ENCODE measurements at regions of chr16 and their contacts with region 1.

Region 1: DNA sequence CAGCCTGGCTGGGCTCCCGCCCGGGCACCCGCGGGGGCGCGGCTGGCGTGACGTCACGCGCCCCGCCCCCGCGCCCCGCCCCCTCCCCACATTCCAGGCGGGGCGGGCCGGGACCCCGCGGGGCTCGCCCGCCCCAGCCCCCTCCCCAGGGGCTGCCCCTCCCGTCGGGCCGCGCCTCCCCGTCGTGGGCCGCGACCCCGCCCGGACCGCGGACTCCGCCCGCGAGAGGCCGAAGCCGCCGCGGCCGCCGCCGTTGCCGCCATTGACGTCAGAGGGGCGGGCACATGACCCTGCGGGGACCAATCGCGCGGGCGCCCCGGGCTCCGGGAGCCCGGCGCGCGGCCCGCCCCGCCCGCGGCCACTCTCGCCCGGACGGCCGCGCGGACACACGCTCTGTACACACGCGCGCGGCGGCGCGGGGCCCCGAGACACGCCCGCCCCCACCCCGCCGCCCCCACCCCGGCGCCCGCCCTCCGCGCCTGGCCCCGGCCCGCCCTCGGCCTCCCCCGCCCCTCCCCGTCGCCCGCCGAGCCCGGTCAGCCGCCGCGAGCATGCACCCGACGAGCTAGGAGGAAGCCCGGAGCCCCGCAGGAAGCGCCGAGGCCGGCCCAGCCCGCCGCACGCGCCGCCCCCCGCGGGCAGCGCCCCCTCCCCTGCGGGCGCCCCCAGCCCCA is at the start of gene CMIP:
- DNase-seq: peak; percentile 81
- ATAC-seq: peak; percentile 75
- H3K4me3 Mint-ChIP-seq: peak within 1 kb of the TSS; percentile 87
- H3K27ac Mint-ChIP-seq: peak within 1 kb of the TSS; percentile 88
- H3K4me1 Mint-ChIP-seq: peaks cover 44% of the 10 kb centered on the region
- H3K27me3 Mint-ChIP-seq: peaks cover 2% of the 10 kb centered on the region
- CTCF ChIP-seq: no peak
- total RNA-seq, gene CMIP: 37.6 to 38.5 TPM

Region 2: DNA sequence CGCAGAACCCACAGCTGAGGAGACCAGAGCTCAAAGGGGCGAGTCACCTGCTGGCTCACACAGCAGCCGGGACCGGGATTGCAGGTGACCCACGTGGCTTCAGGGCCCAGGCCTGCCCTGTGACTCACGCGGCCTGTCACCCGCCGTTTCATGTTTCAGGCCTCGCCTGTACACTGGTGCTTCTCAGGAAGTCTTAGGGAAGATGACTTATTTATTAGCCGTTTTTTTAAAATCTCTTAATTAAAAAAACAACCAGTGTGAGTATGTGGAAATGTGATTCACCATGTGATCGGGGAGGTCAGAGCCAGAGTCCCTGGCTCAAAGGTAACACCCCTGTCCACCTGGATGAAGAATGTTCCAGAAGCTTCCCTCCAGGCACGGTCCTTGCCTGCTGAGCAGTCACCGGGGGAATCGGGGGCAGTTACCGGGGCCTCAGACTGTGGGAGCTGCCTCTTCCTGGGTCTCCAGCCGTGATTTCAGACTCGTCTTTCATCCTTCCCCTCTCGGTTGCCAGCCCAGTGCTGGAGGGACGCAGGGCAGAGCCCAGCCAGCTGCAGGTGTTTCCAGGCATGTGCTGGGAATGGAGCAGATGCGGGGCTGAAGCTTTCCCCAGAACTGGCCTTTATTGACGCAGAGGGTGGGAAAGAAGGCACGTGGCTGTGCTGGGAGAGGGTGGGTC is 49.3 kb after region 1 on chr16:
- CTCF ChIA-PET with region 1: no interaction called
- POLR2A ChIA-PET with region 1: no interaction called
- intact Hi-C with region 1: no loop called
- DNase-seq: peak; percentile 57
- ATAC-seq: peak; percentile 86
- H3K4me3 Mint-ChIP-seq: no peak overlapping the region
- H3K27ac Mint-ChIP-seq: no peak overlapping the region
- H3K4me1 Mint-ChIP-seq: peaks cover 19% of the 10 kb centered on the region
- H3K27me3 Mint-ChIP-seq: no peaks in the 10 kb centered on the region
- CTCF ChIP-seq: no peak

Region 3: DNA sequence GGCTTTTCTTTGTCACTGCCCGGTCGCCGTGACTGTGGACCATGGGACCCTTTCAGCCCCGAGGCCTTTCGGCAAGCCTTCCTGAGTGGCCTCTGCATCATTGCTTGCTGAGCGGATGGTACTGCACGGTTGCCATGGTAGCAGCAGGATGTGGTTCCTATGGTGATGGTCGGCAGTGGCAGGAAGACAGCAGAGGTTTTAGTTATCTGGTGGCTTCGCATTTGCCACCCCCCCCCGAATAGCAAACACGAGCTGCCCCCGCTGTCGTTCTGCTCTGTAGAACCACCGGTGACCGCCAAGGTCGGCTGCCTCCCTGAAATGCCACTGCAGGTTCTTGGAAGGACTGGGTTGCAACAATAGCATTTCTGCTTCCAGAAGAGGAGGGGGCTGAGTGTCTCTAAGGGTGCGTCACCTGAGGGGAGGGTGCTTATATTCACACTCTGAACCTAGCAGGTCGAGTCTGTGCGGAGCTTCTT is 76.6 kb after region 1 on chr16:
- CTCF ChIA-PET with region 1: no interaction called
- POLR2A ChIA-PET with region 1: no interaction called
- intact Hi-C with region 1: loop called (anchors 5 kb)
- DNase-seq: peak; percentile 93
- ATAC-seq: peak; percentile 85
- H3K4me3 Mint-ChIP-seq: no peak overlapping the region
- H3K27ac Mint-ChIP-seq: peak overlapping the region; percentile 58
- H3K4me1 Mint-ChIP-seq: peaks cover 54% of the 10 kb centered on the region
- H3K27me3 Mint-ChIP-seq: no peaks in the 10 kb centered on the region
- CTCF ChIP-seq: no peak

Measured in activated CD8-positive, alpha-beta T cell treated with anti-CD3 and anti-CD28 coated beads for 36 hours (primary cell).